ENCODE measurements at regions of chr6 and their contacts with region 1.

Region 1: GRCh38 chr6:18503593-18504231 is 116.6 kb downstream of the RNF144B start:
- DNase-seq: peak; percentile 55 to 76 (median 71)
- H3K4me3 ChIP-seq: peak overlapping the region in 2 of 4 donors; percentile 15 to 48
- H3K27ac ChIP-seq: peak overlapping the region in 2 of 5 donors; percentile 27 to 69
- H3K4me1 ChIP-seq: no peaks in the 10 kb centered on the region
- H3K27me3 ChIP-seq: no peaks in the 10 kb centered on the region
- CTCF ChIP-seq: peak; percentile 49 to 94 (median 85)
- POLR2A ChIP-seq: peak in 1 of 2 donors; percentile 6

Region 2: GRCh38 chr6:18323935-18324705 is 179.6 kb before region 1 on chr6:
- intact Hi-C with region 1: loop called (anchors 2 to 5 kb)
- DNase-seq: peak in 2 of 7 donors; percentile 12 to 25
- H3K4me3 ChIP-seq: no peak overlapping the region
- H3K27ac ChIP-seq: no peak overlapping the region
- H3K4me1 ChIP-seq: no peaks in the 10 kb centered on the region
- H3K27me3 ChIP-seq: no peaks in the 10 kb centered on the region
- CTCF ChIP-seq: peak; percentile 54 to 78 (median 70)
- POLR2A ChIP-seq: no peak